ENCODE measurements at regions of chr4 and their contacts with region 1.

Region 1: GRCh38 chr4:75790024-75790423 is 65.6 kb downstream of the USO1 start:
- DNase-seq: no peak
- ATAC-seq: no peak

Region 2: GRCh38 chr4:75968084-75968483 is 178.1 kb after region 1 on chr4:
- intact Hi-C with region 1: loop called in 1 of 2 experiments (anchors 10 kb)
- DNase-seq: no peak
- ATAC-seq: no peak